ENCODE measurements at regions of chr19 and their contacts with region 1.

Region 1: GRCh38 chr19:28466107-28467045 is 746.6 kb downstream of the UQCRFS1 start:
- DNase-seq: peak; percentile 30
- ATAC-seq: no peak; the same call in 1 of the 2 replicates
- H3K4me3 ChIP-seq: no peak overlapping the region
- H3K27ac ChIP-seq: no peak overlapping the region
- H3K4me1 ChIP-seq: no peaks in the 10 kb centered on the region
- H3K27me3 ChIP-seq: no peaks in the 10 kb centered on the region; the same call in 1 of the 2 replicates
- CTCF ChIP-seq: peak; percentile 94

Region 2: GRCh38 chr19:28377077-28377476 is 89.3 kb before region 1 on chr19:
- CTCF ChIA-PET with region 1: no interaction called
- POLR2A ChIA-PET with region 1: no interaction called
- in situ Hi-C with region 1: no loop called
- intact Hi-C with region 1: no loop called
- DNase-seq: no peak
- ATAC-seq: no peak
- H3K4me3 ChIP-seq: no peak overlapping the region
- H3K27ac ChIP-seq: no peak overlapping the region
- H3K4me1 ChIP-seq: no peaks in the 10 kb centered on the region
- H3K27me3 ChIP-seq: no peaks in the 10 kb centered on the region
- CTCF ChIP-seq: no peak

Region 3: DNA sequence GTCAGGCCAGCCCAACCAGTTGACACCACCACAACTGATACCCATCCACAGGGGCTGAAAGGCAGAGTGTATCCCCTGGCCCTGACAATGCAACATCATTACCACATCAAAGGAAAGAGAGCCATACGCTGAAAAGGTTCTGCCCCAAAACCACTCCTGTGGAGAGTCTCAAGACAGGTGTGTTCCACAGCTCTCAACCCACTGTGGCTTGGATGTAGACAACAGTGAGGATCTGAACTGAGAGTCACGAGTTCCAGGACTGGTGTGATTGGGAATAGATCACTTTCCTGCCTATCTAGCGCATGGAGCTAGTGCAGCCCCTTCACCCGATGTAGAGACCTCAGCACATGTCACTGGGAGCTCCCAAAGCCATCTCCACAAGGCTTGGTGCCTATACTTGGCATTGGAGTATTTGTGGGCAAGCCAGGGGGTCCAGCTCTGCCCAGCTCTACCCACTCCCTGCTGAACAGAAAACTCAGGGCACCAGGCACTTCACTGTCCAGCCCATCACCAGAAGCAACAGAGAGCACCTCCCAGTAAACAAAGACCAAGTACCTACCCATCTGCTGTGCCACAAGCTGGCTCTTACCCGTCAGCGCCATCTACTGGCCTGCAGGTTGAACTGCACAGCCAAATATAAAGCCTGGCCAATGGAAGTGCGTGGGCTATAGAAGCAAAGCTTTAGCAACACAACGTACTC is 167.1 kb after region 1 on chr19:
- CTCF ChIA-PET with region 1: interaction called, 6 read pairs
- POLR2A ChIA-PET with region 1: no interaction called
- in situ Hi-C with region 1: no loop called
- intact Hi-C with region 1: loop called (anchors 2 kb)
- DNase-seq: peak; percentile 15
- ATAC-seq: peak; percentile 77
- H3K4me3 ChIP-seq: no peak overlapping the region
- H3K27ac ChIP-seq: no peak overlapping the region
- H3K4me1 ChIP-seq: no peaks in the 10 kb centered on the region
- H3K27me3 ChIP-seq: no peaks in the 10 kb centered on the region
- CTCF ChIP-seq: peak; percentile 91

Region 4: GRCh38 chr19:28710278-28710677 is 243.9 kb after region 1 on chr19:
- CTCF ChIA-PET with region 1: no interaction called
- POLR2A ChIA-PET with region 1: no interaction called
- in situ Hi-C with region 1: no loop called
- intact Hi-C with region 1: loop called (anchors 2 kb)
- DNase-seq: peak; percentile 72
- ATAC-seq: peak; percentile 76; the same call in 1 of the 2 replicates
- H3K4me3 ChIP-seq: no peak overlapping the region
- H3K27ac ChIP-seq: no peak overlapping the region
- H3K4me1 ChIP-seq: no peaks in the 10 kb centered on the region
- H3K27me3 ChIP-seq: no peaks in the 10 kb centered on the region
- CTCF ChIP-seq: peak; percentile 72; the same call in 1 of the 2 replicates

Region 5: GRCh38 chr19:29001141-29001581 is 534.8 kb after region 1 on chr19:
- CTCF ChIA-PET with region 1: no interaction called
- POLR2A ChIA-PET with region 1: no interaction called
- in situ Hi-C with region 1: no loop called
- intact Hi-C with region 1: no loop called
- DNase-seq: no peak
- ATAC-seq: no peak
- H3K4me3 ChIP-seq: no peak overlapping the region
- H3K27ac ChIP-seq: no peak overlapping the region
- H3K4me1 ChIP-seq: no peaks in the 10 kb centered on the region
- H3K27me3 ChIP-seq: no peaks in the 10 kb centered on the region
- CTCF ChIP-seq: no peak

Measured in Panc1 (cell line).